ENCODE measurements at regions of chr9 and their contacts with region 1.

Region 1: GRCh38 chr9:72364679-72365524 is at the start of gene ZFAND5:
- DNase-seq: peak; percentile 100
- ATAC-seq: peak; percentile 96
- total RNA-seq, gene ZFAND5: 174 TPM

Region 2: GRCh38 chr9:72305102-72305546 is 59.8 kb before region 1 on chr9:
- intact Hi-C with region 1: loop called (anchors 2 kb)
- DNase-seq: peak; percentile 88
- ATAC-seq: peak; percentile 100

Region 3: GRCh38 chr9:72454871-72455491 is 90.1 kb after region 1 on chr9:
- intact Hi-C with region 1: no loop called
- DNase-seq: no peak
- ATAC-seq: no peak

Region 4: DNA sequence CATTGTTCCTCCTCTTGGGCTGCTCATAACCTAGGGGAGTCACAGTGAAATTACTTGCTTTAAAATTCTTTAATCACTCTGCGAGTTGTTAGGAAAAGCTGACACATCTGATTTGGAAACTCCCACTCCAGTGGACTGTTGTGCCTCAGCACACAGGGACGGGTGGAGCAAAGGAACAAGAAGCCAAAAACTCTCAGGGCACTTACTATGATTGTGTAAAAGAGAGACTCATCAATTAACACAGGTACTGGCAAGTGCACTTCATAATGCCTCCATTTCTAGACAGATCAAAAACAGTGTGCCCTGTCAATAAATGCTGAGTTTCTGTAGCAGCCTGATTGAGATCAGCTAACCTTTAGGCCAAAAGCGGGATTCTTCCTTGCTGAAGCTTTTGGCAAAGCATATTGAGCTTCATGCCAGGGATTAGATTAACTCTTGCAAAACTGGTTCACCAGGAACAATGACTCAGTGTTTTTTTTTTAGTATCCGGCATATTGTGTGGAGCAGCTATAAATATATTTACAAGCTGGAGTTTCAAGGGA is 212.4 kb after region 1 on chr9:
- intact Hi-C with region 1: loop called (anchors 2 kb)
- DNase-seq: no peak
- ATAC-seq: peak; percentile 75